CD4-positive, alpha-beta memory T cell (primary cell): ENCODE measurements at regions of chr6 and their contacts with region 1.

Region 1: GRCh38 chr6:110179401-110180227 is at the start of gene WASF1:
- DNase-seq: peak; percentile 90 to 93 (median 92)
- H3K4me3 ChIP-seq: peak within 1 kb of the TSS; percentile 77 to 92
- H3K4me3 Mint-ChIP-seq: peak within 1 kb of the TSS; percentile 82 to 92 (median 86)
- H3K27ac ChIP-seq: peak within 1 kb of the TSS; percentile 88
- H3K27ac Mint-ChIP-seq: peak within 1 kb of the TSS; percentile 24 to 90 (median 64)
- H3K4me1 ChIP-seq: peaks cover 46% of the 10 kb centered on the region
- H3K4me1 Mint-ChIP-seq: peaks cover 5 to 7% (median 6%) of the 10 kb centered on the region in 4 donors
- H3K27me3 ChIP-seq: no peaks in the 10 kb centered on the region
- H3K27me3 Mint-ChIP-seq: peaks cover 4 to 5% of the 10 kb centered on the region in 2 donors
- total RNA-seq, gene WASF1: 0.39 to 0.70 TPM

Region 2: GRCh38 chr6:108294727-108295625 is 1884.6 kb before region 1 on chr6 and contains the start of gene AFG1L:
- CTCF ChIA-PET with region 1: no interaction called
- POLR2A ChIA-PET with region 1: no interaction called
- intact Hi-C with region 1: loop called (anchors 10 kb)
- DNase-seq: peak; percentile 85 to 92 (median 88)
- H3K4me3 ChIP-seq: peak within 1 kb of the TSS; percentile 68 to 98
- H3K4me3 Mint-ChIP-seq: peak within 1 kb of the TSS; percentile 96 to 99 (median 98)
- H3K27ac ChIP-seq: peak within 1 kb of the TSS; percentile 91
- H3K27ac Mint-ChIP-seq: peak within 1 kb of the TSS; percentile 91 to 100 (median 99)
- H3K4me1 ChIP-seq: peaks cover 17% of the 10 kb centered on the region
- H3K4me1 Mint-ChIP-seq: peaks cover 6 to 23% (median 15%) of the 10 kb centered on the region in 4 donors
- H3K27me3 ChIP-seq: no peaks in the 10 kb centered on the region
- H3K27me3 Mint-ChIP-seq: no peaks in the 10 kb centered on the region
- total RNA-seq, gene AFG1L: 6.3 to 6.6 TPM

Region 3: DNA sequence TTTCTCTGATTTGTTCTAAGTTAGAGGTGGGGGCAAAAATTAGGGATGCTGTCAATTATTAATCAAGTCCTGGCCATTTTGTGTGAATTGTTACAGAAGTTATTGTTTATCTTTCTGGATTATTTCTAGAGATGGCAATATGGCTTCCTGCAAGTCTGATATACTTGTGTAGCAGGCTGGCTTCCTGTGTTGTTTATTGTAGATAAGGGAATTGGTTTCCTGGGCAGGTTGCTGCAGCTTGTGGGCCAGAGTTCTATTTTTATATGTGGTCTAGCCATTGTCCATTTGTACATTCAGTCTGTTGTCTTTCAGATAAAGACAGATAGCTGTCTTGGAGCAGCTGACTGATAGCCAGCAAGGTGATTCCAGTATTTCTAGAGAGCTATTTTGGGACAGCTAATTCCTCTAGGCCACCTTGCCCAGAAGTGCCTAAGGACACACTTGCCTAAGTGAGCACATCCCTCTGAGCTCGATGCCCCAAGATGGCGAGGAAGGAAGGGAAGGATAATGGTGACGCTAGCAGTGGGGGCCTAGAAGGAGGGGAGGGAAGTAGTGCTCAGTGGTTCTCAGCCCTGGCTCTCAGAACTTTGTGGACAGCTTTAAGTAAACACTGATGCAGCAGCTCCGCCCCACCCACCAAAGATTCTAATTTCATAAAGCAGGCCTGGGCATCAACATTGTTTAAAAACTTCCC is 210.2 kb after region 1 on chr6:
- CTCF ChIA-PET with region 1: interaction called, 36 read pairs
- POLR2A ChIA-PET with region 1: interaction called, 5 read pairs
- intact Hi-C with region 1: loop called (anchors 1 kb)
- DNase-seq: no peak
- H3K4me3 ChIP-seq: no peak overlapping the region
- H3K4me3 Mint-ChIP-seq: peak overlapping the region in 1 of 8 donors; percentile 7
- H3K27ac ChIP-seq: no peak overlapping the region
- H3K27ac Mint-ChIP-seq: peak overlapping the region in 2 of 7 donors; percentile 43 to 74
- H3K4me1 ChIP-seq: no peaks in the 10 kb centered on the region
- H3K4me1 Mint-ChIP-seq: peaks cover 3 to 13% (median 11%) of the 10 kb centered on the region in 4 donors
- H3K27me3 ChIP-seq: no peaks in the 10 kb centered on the region
- H3K27me3 Mint-ChIP-seq: no peaks in the 10 kb centered on the region